Activated CD4-positive, alpha-beta T cell treated with anti-CD3 and anti-CD28 coated beads for 36 hours (primary cell): ENCODE measurements at regions of chr6 and their contacts with region 1.

Region 1: DNA sequence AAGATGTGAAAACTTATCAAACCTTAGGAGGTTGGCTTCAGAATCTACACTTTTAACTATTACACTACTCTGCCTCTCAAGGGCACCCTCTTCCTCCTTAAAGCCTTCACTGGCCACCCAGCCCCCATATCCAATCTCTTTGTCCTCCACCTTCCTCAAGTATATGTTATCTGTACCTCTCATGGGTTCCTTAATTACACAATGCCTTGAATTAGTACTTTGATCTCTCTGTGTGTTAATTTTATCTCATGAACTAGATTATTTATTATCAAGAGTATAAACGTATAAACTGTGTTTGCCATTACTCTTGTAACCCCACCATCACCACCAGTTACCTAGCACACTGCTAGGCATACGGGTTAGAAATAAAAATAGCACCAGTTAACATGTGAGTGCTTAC is 83.3 kb downstream of the NCR2 start:
- DNase-seq: no peak
- ATAC-seq: no peak
- H3K4me3 Mint-ChIP-seq: no peak overlapping the region
- H3K27ac Mint-ChIP-seq: no peak overlapping the region
- H3K4me1 Mint-ChIP-seq: peaks cover 6% of the 10 kb centered on the region
- H3K27me3 Mint-ChIP-seq: peaks cover 48% of the 10 kb centered on the region

Region 2: DNA sequence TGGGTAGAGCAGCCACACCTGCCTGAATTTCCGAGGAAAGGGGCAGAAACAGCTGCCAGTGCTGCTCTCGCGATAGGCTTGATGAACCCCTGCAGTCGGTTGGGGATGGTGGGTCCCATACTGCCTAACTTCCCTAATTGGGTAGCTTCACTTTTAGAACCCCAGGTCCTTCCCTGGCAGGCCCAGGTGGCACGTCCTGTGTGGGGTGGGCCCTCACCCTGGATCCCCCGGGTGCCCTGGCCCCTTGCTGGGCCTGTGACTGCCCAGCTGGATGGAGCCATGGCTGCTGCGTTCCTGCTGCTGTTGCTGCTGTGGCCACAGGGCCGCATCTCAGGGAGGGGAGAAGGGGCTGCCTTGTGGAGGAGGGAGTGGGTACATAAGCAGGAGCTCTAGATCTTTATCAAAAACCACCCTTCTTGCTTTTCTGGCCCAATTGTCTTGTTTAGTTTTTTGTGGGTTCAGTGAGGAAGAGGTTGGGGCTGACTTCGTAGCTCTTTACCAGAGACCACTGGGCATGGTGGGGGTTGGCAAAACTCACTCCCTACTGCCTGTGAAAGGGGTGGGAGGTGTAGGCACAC is 171.4 kb before region 1 on chr6:
- CTCF ChIA-PET with region 1: no interaction called
- POLR2A ChIA-PET with region 1: no interaction called
- intact Hi-C with region 1: no loop called
- DNase-seq: no peak
- ATAC-seq: no peak
- H3K4me3 Mint-ChIP-seq: no peak overlapping the region
- H3K27ac Mint-ChIP-seq: no peak overlapping the region
- H3K4me1 Mint-ChIP-seq: peaks cover 15% of the 10 kb centered on the region
- H3K27me3 Mint-ChIP-seq: no peaks in the 10 kb centered on the region

Region 3: GRCh38 chr6:41325446-41326066 is 93.2 kb before region 1 on chr6:
- CTCF ChIA-PET with region 1: no interaction called
- POLR2A ChIA-PET with region 1: no interaction called
- intact Hi-C with region 1: no loop called
- DNase-seq: no peak
- ATAC-seq: no peak
- H3K4me3 Mint-ChIP-seq: no peak overlapping the region
- H3K27ac Mint-ChIP-seq: no peak overlapping the region
- H3K4me1 Mint-ChIP-seq: no peaks in the 10 kb centered on the region
- H3K27me3 Mint-ChIP-seq: no peaks in the 10 kb centered on the region

Region 4: DNA sequence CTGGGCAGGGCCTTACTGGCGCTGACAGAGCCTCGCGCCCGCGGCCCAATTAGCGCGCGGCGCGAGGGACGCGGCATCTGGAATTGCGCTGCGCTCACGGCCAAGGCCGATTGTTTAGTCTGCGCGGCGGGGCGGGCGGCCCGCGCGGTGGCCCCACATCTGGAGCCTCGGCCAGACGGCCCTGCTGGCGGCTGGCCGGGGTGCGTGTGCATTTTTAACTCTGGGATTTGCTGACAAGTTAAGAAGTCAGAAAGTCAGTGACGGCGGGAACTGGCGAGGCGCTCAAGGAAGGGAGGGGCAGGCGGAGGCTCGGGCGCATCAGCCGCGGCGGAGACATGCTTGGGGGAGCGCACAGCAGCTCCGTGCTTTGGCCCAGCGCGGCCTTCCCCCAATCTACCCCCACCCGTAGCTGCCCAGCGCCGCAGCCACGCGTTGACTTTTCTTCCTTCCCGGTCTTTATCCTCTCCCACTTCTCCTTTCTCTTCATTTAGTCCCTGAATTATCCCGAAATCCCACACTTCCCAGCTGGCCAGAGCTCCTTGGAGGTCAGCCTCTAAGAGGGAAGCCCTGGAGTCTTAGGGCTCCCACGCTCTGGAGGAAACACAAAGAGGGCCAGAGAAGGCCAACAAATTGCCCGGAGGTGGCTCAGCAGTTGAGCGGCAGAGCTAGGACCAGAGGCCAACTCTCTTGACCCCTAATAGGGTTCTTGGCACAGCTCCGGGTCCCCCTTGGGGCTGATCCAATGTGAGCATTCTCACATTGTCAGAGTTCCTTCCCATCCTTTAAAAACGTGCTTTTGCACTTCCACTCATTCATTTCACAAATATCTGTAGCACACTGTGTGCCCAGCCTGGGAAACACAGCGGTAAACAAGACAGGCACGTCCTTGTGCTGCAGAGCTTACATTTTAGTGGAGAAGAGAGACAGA is 86.6 kb after region 1 on chr6:
- CTCF ChIA-PET with region 1: no interaction called
- POLR2A ChIA-PET with region 1: no interaction called
- intact Hi-C with region 1: no loop called
- DNase-seq: peak; percentile 52
- ATAC-seq: peak; percentile 57
- H3K4me3 Mint-ChIP-seq: no peak overlapping the region
- H3K27ac Mint-ChIP-seq: no peak overlapping the region
- H3K4me1 Mint-ChIP-seq: peaks cover 13% of the 10 kb centered on the region
- H3K27me3 Mint-ChIP-seq: peaks cover 52% of the 10 kb centered on the region

Region 5: GRCh38 chr6:41747256-41748101 is 328.7 kb after region 1 on chr6 and contains the start of gene PGC:
- CTCF ChIA-PET with region 1: interaction called, 3 read pairs
- POLR2A ChIA-PET with region 1: no interaction called
- intact Hi-C with region 1: loop called in 1 of 2 experiments (anchors 2 kb)
- DNase-seq: no peak
- ATAC-seq: no peak
- H3K4me3 Mint-ChIP-seq: no peak within 1 kb of the TSS
- H3K27ac Mint-ChIP-seq: no peak within 1 kb of the TSS
- H3K4me1 Mint-ChIP-seq: no peaks in the 10 kb centered on the region
- H3K27me3 Mint-ChIP-seq: no peaks in the 10 kb centered on the region
- total RNA-seq, gene PGC: not detected